Activated CD8-positive, alpha-beta T cell treated with anti-CD3 and anti-CD28 coated beads, Interleukin-2, amount 10 ng/mL, durations not matched to agents 7 days and 5 days (primary cell): ENCODE measurements at regions of chr20 and their contacts with region 1.

Region 1: GRCh38 chr20:37992802-37993409 is 40.4 kb downstream of the TTI1 start:
- DNase-seq: peak; percentile 55
- ATAC-seq: no peak
- H3K4me3 Mint-ChIP-seq: no peak overlapping the region
- H3K27ac Mint-ChIP-seq: peak overlapping the region; percentile 53
- H3K4me1 Mint-ChIP-seq: peaks cover 37% of the 10 kb centered on the region
- H3K27me3 Mint-ChIP-seq: no peaks in the 10 kb centered on the region

Region 2: GRCh38 chr20:37564388-37565133 is 428.3 kb before region 1 on chr20:
- CTCF ChIA-PET with region 1: interaction called, 14 read pairs
- POLR2A ChIA-PET with region 1: no interaction called
- DNase-seq: peak; percentile 50
- ATAC-seq: peak; percentile 73
- H3K4me3 Mint-ChIP-seq: no peak overlapping the region
- H3K27ac Mint-ChIP-seq: no peak overlapping the region
- H3K4me1 Mint-ChIP-seq: no peaks in the 10 kb centered on the region
- H3K27me3 Mint-ChIP-seq: peaks cover 34% of the 10 kb centered on the region

Region 3: DNA sequence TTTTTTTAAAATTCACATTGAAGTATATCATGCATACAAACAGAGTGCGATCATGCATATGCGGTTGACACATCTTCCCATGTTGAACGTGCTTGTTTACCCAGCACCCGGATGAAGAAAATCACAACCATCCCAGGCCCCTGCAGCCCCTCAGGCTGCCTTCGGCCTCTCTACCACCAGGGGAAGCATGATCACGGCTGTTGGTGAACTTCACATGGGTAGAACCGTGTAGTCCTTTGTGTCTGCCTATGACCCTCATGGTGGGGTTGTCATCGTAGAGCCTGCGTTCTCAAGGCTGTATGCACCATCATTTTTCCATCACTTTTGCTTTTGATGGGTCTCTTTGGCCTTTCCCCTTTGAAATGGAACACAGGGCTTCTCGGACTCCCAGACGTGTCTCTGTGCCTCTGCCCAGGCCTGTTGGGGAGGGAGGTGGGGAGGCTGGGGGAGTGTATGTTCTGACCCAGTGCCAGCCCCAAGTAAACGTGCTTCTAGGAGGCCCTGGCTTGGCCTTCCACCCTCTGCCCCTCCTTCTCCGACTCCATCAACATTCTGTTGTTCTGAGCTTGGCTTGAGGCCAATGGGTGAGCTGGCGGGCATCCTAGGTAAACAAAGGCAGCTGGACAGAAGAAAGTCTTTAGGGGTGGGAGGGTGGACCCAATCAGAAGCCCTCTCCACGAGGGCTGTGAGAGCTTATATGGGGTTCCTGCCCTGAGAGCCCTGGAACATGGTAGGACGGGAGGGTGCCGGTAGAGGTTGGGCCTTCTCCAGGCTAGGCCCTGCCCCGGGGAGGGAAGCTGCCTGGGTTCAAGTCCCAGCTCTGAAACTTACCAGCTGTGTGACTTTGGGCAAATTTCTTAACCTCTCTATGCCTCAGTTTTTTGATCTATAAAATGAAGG is 132.5 kb after region 1 on chr20:
- CTCF ChIA-PET with region 1: no interaction called
- POLR2A ChIA-PET with region 1: no interaction called
- DNase-seq: no peak
- ATAC-seq: no peak
- H3K4me3 Mint-ChIP-seq: no peak overlapping the region
- H3K27ac Mint-ChIP-seq: no peak overlapping the region
- H3K4me1 Mint-ChIP-seq: peaks cover 6% of the 10 kb centered on the region
- H3K27me3 Mint-ChIP-seq: no peaks in the 10 kb centered on the region